ENCODE measurements at regions of chr4 and their contacts with region 1.

Region 1: GRCh38 chr4:158722917-158723793 is at the start of gene PPID:
- DNase-seq: peak; percentile 43 to 87 (median 70)
- ATAC-seq: peak; percentile 85 to 93 (median 90)
- H3K4me3 ChIP-seq: peak within 1 kb of the TSS; percentile 72 to 82
- H3K4me3 Mint-ChIP-seq: peak within 1 kb of the TSS; percentile 99 to 100 (median 100)
- H3K27ac ChIP-seq: peak within 1 kb of the TSS; percentile 87
- H3K27ac Mint-ChIP-seq: peak within 1 kb of the TSS; percentile 98 to 100
- H3K4me1 ChIP-seq: peaks cover 9 to 15% of the 10 kb centered on the region in 2 experiments
- H3K4me1 Mint-ChIP-seq: peaks cover 35 to 43% (median 40%) of the 10 kb centered on the region in 3 donors
- H3K27me3 ChIP-seq: peaks cover 0 to 5% of the 10 kb centered on the region in 2 experiments
- H3K27me3 Mint-ChIP-seq: peaks cover 10 to 13% of the 10 kb centered on the region in 2 donors
- total RNA-seq, gene PPID: 14.6 to 28.3 (median 26.2) TPM

Region 2: GRCh38 chr4:157779081-157779480 is 944.1 kb before region 1 on chr4:
- CTCF ChIA-PET with region 1: no interaction called
- POLR2A ChIA-PET with region 1: no interaction called
- DNase-seq: no peak
- ATAC-seq: no peak
- H3K4me3 ChIP-seq: no peak overlapping the region
- H3K4me3 Mint-ChIP-seq: no peak overlapping the region
- H3K27ac ChIP-seq: no peak overlapping the region
- H3K27ac Mint-ChIP-seq: no peak overlapping the region
- H3K4me1 ChIP-seq: no peaks in the 10 kb centered on the region
- H3K4me1 Mint-ChIP-seq: no peaks in the 10 kb centered on the region
- H3K27me3 ChIP-seq: no peaks in the 10 kb centered on the region
- H3K27me3 Mint-ChIP-seq: no peaks in the 10 kb centered on the region

Region 3: GRCh38 chr4:158682066-158682465 is 41.1 kb before region 1 on chr4:
- CTCF ChIA-PET with region 1: no interaction called
- POLR2A ChIA-PET with region 1: no interaction called
- DNase-seq: no peak
- ATAC-seq: no peak
- H3K4me3 ChIP-seq: no peak overlapping the region
- H3K4me3 Mint-ChIP-seq: no peak overlapping the region
- H3K27ac ChIP-seq: no peak overlapping the region
- H3K27ac Mint-ChIP-seq: no peak overlapping the region
- H3K4me1 ChIP-seq: no peaks in the 10 kb centered on the region
- H3K4me1 Mint-ChIP-seq: peaks cover 0 to under 1% (median 0%) of the 10 kb centered on the region in 3 donors
- H3K27me3 ChIP-seq: no peaks in the 10 kb centered on the region
- H3K27me3 Mint-ChIP-seq: no peaks in the 10 kb centered on the region

Region 4: GRCh38 chr4:158741326-158742025 is 18.3 kb after region 1 on chr4:
- CTCF ChIA-PET with region 1: no interaction called
- POLR2A ChIA-PET with region 1: no interaction called
- DNase-seq: no peak
- ATAC-seq: no peak
- H3K4me3 ChIP-seq: no peak overlapping the region
- H3K4me3 Mint-ChIP-seq: no peak overlapping the region
- H3K27ac ChIP-seq: no peak overlapping the region
- H3K27ac Mint-ChIP-seq: no peak overlapping the region
- H3K4me1 ChIP-seq: no peaks in the 10 kb centered on the region
- H3K4me1 Mint-ChIP-seq: no peaks in the 10 kb centered on the region
- H3K27me3 ChIP-seq: peaks cover 0 to 9% of the 10 kb centered on the region in 2 experiments
- H3K27me3 Mint-ChIP-seq: peaks cover 6 to 9% of the 10 kb centered on the region in 2 donors

Region 5: DNA sequence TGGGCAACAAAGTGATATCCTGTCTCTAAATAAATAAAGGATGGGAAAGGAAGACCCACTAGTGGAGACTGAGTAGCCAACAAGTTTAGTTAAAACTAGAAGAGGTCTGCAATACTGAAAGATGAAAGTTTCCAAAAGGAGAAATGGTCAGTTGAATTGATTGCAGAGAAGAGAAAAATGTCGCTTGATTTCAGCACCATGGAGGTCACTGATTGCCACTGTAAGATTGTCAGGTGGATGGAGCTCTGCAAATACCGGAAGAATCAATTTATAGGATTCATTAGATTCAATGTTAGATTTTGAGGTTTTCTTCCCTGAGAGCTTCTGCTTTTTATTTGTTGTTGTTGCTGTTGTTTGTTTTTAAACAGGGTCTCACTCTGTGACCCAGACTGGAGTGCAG is 40.3 kb after region 1 on chr4:
- CTCF ChIA-PET with region 1: interaction called in 1 of 2 experiments, 10 read pairs
- POLR2A ChIA-PET with region 1: no interaction called
- DNase-seq: no peak
- ATAC-seq: no peak
- H3K4me3 ChIP-seq: no peak overlapping the region
- H3K4me3 Mint-ChIP-seq: no peak overlapping the region
- H3K27ac ChIP-seq: no peak overlapping the region
- H3K27ac Mint-ChIP-seq: no peak overlapping the region
- H3K4me1 ChIP-seq: peaks cover 0 to 2% of the 10 kb centered on the region in 2 experiments
- H3K4me1 Mint-ChIP-seq: peaks cover 0 to 10% (median 10%) of the 10 kb centered on the region in 3 donors
- H3K27me3 ChIP-seq: peaks cover 0 to 11% of the 10 kb centered on the region in 2 experiments
- H3K27me3 Mint-ChIP-seq: peaks cover 0 to 20% of the 10 kb centered on the region in 2 donors

Region 6: DNA sequence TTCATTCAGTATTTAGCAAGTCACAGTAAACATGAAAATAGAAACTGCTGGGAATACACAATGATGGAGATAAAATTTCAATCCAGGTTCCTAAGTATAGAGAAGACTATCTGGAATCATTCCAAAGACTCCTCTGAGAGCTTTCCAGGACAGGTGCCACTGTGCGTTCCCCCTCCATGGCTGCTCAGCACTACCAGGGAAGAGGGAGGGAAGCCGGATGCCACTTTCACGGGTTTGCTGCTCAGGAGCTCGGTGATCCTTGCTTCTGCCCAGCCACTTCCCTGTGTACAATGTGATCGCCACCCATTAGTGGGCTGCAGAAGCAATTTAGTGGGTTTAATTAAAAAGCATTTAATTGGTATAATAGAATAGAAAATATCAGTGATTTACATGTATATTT is 140.1 kb after region 1 on chr4:
- CTCF ChIA-PET with region 1: no interaction called
- POLR2A ChIA-PET with region 1: no interaction called
- DNase-seq: no peak
- ATAC-seq: no peak
- H3K4me3 ChIP-seq: no peak overlapping the region
- H3K4me3 Mint-ChIP-seq: no peak overlapping the region
- H3K27ac ChIP-seq: no peak overlapping the region
- H3K27ac Mint-ChIP-seq: no peak overlapping the region
- H3K4me1 ChIP-seq: no peaks in the 10 kb centered on the region
- H3K4me1 Mint-ChIP-seq: no peaks in the 10 kb centered on the region
- H3K27me3 ChIP-seq: no peaks in the 10 kb centered on the region
- H3K27me3 Mint-ChIP-seq: no peaks in the 10 kb centered on the region